Heart left ventricle (tissue), 16 donors: ENCODE measurements at regions of chr2 and their contacts with region 1.

Region 1: GRCh38 chr2:42922790-42923579 is 130.6 kb upstream of the HAAO start:
- DNase-seq: peak in 1 of 5 donors; percentile 20
- ATAC-seq: peak in 2 of 4 donors; percentile 17 to 36
- H3K4me3 ChIP-seq: no peak overlapping the region
- H3K27ac ChIP-seq: peak overlapping the region; percentile 85 to 98 (median 91)
- H3K4me1 ChIP-seq: peaks cover 28 to 70% (median 58%) of the 10 kb centered on the region in 12 donors
- H3K27me3 ChIP-seq: no peaks in the 10 kb centered on the region
- CTCF ChIP-seq: no peak
- POLR2A ChIP-seq: no peak

Region 2: DNA sequence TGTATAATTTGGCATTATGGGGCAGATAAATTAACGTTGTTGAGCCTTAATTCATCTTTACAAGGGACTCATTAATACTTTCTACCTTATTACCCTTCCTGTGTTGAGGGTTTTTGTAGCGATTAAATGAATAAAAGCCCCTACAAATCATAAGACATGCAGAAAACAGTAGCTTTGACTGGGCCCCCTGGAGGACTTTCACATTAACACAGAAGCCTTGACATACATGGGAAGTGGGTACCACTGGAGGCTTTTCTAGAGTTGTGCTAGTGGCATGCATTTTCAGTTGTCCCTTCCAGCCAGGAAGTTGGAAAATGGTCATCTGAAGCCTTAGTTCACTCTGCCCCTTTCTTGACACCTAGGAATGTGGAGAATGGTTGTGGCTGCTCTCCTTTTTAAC is 324.3 kb before region 1 on chr2:
- intact Hi-C with region 1: no loop called
- DNase-seq: no peak
- ATAC-seq: no peak
- H3K4me3 ChIP-seq: no peak overlapping the region
- H3K27ac ChIP-seq: no peak overlapping the region
- H3K4me1 ChIP-seq: no peaks in the 10 kb centered on the region
- H3K27me3 ChIP-seq: no peaks in the 10 kb centered on the region
- CTCF ChIP-seq: no peak
- POLR2A ChIP-seq: no peak

Region 3: GRCh38 chr2:42878581-42878980 is 44.4 kb before region 1 on chr2:
- intact Hi-C with region 1: loop called in 7 of 10 experiments (anchors 2 to 10 kb)
- DNase-seq: no peak
- ATAC-seq: no peak
- H3K4me3 ChIP-seq: no peak overlapping the region
- H3K27ac ChIP-seq: peak overlapping the region; percentile 3 to 93 (median 80)
- H3K4me1 ChIP-seq: peaks cover 6 to 84% (median 68%) of the 10 kb centered on the region in 12 donors
- H3K27me3 ChIP-seq: no peaks in the 10 kb centered on the region
- CTCF ChIP-seq: no peak
- POLR2A ChIP-seq: no peak

Region 4: DNA sequence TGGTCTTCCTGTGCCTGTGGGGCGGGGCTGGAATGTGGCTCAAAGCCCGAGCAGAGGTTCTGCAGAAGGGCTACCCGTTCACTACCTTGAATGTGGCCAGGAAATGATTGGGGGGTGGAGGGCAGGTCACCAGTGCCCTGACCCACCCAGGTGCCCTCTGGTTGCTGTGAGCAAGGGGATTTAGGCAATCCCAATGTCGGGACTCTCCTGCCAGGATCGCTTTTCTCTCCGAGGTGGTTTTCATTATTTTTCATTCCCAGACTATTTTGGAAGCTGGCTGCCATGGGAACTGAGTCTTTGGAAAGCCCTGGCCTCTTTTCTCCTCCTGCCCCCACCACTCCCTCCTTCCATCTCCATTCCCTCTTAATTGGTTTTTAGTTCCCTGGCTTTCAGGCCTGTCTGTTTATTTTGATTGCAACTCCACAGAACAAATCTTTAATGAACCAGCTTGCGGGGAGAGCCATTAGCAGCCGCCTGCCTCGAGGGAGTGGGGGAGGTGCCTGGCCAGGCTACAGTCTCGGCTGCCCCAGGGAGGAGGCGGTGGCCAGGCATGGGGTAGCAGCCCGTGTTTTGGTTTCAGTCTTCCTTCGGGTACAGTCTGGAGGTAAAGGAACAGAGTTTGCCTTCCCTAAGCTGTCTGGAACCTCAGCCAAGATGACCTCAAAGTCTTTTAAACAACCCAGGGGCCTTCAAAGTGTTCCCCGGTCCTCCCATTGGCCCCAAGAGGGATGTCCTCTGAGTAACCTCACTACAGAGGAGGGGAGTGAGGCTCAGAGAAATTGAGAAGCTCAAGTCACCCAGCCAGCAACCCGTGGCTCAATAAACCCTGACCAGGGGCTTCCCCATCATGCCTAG is 16.2 kb before region 1 on chr2:
- intact Hi-C with region 1: loop called in 2 of 10 experiments (anchors 2 kb)
- DNase-seq: peak; percentile 55 to 81 (median 65)
- ATAC-seq: peak; percentile 52 to 72 (median 71)
- H3K4me3 ChIP-seq: peak overlapping the region in 5 of 12 donors; percentile 9 to 31 (median 14)
- H3K27ac ChIP-seq: peak overlapping the region; percentile 57 to 90 (median 76)
- H3K4me1 ChIP-seq: peaks cover 5 to 73% (median 53%) of the 10 kb centered on the region in 12 donors
- H3K27me3 ChIP-seq: no peaks in the 10 kb centered on the region
- CTCF ChIP-seq: no peak
- POLR2A ChIP-seq: no peak

Region 5: DNA sequence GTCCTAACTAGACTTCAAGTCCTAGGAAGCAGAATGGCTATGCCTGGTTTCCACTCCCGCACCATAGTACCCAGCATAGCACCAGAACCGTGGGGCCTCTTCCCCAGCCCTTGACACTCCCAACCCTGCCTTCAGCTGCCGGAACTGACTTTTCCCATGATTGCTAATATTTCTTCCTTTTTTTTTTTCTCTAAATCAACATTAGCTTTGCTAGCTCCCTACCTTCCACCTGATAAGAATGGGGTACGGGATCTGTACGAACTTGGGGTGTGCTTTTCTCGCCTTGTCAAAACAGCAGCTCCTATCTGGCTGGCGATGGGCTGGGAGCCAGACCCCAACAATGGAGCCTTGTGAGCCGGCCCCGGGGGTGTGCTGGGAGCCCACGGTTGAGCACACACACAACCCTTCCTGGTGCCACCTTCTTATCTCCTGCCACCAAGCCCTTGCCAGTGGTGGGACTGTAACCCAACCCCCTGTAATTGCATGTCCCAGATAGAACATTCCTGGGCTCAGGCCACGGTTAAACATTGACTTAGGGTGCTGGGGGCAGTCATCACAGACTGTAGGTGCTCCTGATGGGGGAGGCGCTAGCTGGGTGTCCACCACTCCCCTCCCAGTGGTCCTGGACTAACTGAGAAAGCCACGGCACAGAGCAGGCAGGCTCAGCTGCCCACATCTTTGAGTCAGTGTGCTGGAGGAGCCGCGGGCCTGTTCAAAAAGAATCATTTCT is 82.4 kb after region 1 on chr2:
- intact Hi-C with region 1: no loop called
- DNase-seq: no peak
- ATAC-seq: peak in 2 of 4 donors; percentile 24 to 29
- H3K4me3 ChIP-seq: no peak overlapping the region
- H3K27ac ChIP-seq: no peak overlapping the region
- H3K4me1 ChIP-seq: peaks cover 0 to 9% (median 0%) of the 10 kb centered on the region in 12 donors
- H3K27me3 ChIP-seq: no peaks in the 10 kb centered on the region
- CTCF ChIP-seq: no peak
- POLR2A ChIP-seq: no peak